ENCODE measurements at regions of chr12 and their contacts with region 1.

Region 1: DNA sequence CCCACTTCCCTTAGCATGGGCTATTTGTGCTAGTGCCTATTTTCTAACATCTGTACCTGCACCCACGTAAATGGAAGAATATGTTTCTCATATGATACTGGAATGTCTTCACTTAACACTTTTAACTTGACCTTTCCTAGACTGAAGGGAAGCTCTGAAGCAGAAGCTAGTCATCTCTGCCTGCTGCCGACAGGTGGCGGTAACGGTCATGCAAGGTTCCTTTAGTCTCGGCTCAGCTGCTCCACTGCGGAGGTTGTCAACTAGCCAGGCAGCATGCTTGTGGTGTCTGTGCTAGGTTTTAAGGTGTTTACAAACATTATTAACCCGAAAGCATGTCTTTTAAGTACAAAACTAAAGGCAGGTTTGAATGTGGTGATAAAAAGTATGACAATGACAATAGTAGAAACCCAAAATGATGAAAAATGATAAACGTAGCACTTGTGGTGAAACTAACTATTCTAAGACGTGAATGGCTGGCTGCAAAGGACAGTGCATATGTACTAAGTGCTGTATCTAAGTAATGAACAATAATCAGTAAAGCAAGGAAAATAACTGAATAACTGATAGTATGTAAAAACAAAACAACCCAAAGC is 117.2 kb downstream of the GRIN2B start:
- DNase-seq: peak; percentile 84
- ATAC-seq: peak; percentile 78

Region 2: GRCh38 chr12:14157088-14157747 is 293.0 kb after region 1 on chr12:
- intact Hi-C with region 1: loop called (anchors 5 kb)
- DNase-seq: no peak
- ATAC-seq: no peak

Measured in Right ventricle myocardium superior (tissue), 1 donor.